ENCODE measurements at regions of chr5 and their contacts with region 1.

Region 1: DNA sequence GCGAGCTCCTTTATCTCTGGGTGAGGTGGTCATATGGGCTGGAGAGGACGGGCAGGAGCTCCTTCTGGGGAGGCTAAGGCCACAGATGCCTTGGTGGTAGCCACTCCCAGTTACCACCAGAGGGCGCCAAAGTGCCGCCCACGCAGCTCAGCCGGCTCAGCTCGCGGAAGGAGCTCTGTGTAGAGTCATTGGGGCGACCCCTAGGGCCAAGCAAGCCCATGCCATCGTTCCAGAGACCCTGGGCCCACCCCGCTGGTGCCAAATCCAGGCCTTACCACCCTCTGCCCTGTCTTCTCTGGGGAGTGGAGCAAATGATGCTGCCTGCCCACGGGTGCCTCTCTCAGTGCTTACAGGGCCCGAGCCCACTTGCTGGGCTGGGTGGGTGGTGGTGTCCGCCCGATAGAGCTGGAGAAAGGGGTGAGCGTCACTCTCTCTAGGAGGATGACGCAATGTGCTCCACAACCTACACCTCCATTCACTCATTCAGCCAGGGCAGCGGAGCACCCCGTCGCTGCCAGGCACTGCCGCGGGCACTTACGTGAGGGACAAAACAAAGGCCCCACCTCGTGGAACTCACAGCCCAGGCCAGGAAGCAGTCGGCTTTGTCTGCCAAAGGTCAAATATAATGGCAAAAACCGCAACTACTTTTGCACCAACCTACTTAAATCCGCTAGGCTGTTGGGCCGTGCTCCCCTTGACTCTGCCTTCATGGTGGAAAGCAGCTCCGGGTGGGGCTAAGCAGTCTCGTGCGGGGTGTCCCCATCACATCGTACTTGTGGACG is 13.8 kb downstream of the TSPAN17 start:
- DNase-seq: peak; percentile 92
- H3K4me3 ChIP-seq: no peak overlapping the region; a peak in 1 of 4 replicates
- H3K27ac ChIP-seq: no peak overlapping the region
- H3K4me1 ChIP-seq: peaks cover 0 to 23% of the 10 kb centered on the region in 2 experiments; a peak in 1 of 4 replicates
- H3K27me3 ChIP-seq: no peaks in the 10 kb centered on the region
- CTCF ChIP-seq: peak; percentile 92
- EP300 ChIP-seq: no peak
- RAD21 ChIP-seq: peak; percentile 97

Region 2: GRCh38 chr5:176647030-176647866 is 13.8 kb before region 1 on chr5 and contains the start of gene TSPAN17:
- CTCF ChIA-PET with region 1: interaction called, 33 read pairs
- POLR2A ChIA-PET with region 1: interaction called, 6 read pairs
- DNase-seq: peak; percentile 100
- H3K4me3 ChIP-seq: peak within 1 kb of the TSS; percentile 89 to 94
- H3K27ac ChIP-seq: peak within 1 kb of the TSS; percentile 52 to 87; a peak in 3 of 4 replicates
- H3K4me1 ChIP-seq: peaks cover 4 to 42% of the 10 kb centered on the region in 2 experiments; a peak in 2 of 4 replicates
- H3K27me3 ChIP-seq: no peaks in the 10 kb centered on the region
- CTCF ChIP-seq: peak; percentile 46
- EP300 ChIP-seq: no peak; a peak in 1 of 4 replicates
- RAD21 ChIP-seq: peak; percentile 69
- polyA plus RNA-seq, gene TSPAN17: 61.7 and 68.4 TPM in 2 replicates

Region 3: GRCh38 chr5:176725521-176726280 is 64.7 kb after region 1 on chr5:
- CTCF ChIA-PET with region 1: interaction called, 15 read pairs
- POLR2A ChIA-PET with region 1: no interaction called
- DNase-seq: no peak
- H3K4me3 ChIP-seq: no peak overlapping the region
- H3K27ac ChIP-seq: no peak overlapping the region
- H3K4me1 ChIP-seq: peaks cover 0 to 16% of the 10 kb centered on the region in 2 experiments; a peak in 1 of 4 replicates
- H3K27me3 ChIP-seq: peaks cover 17% of the 10 kb centered on the region; the same call in 1 of the 2 replicates
- CTCF ChIP-seq: no peak
- EP300 ChIP-seq: no peak
- RAD21 ChIP-seq: no peak

Region 4: DNA sequence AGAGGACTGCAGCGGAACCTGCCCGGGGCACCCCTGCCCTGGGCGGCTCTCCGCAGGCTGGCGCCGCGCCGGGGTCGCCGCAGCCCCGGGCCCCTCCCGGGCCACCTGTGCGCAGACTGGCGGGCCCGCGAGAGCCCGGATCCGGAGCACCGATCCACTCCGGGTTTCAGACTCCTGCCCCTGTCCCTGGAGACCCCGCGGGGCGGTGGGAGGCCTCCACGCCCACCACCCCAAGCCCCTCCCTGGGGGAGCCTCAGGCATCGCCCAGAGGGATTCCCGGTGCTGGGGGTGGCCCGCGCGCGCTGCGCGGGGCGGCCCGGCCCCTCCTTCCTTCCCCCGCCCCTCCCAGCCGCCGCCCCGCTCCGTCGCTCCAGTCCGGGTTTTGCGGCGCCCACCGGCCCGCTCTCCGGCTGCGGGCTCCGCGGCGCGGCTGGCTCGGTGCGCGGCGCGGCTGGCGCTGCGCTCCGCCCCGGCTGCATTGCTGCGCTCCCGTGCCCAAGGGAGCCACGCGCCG is 149.1 kb after region 1 on chr5 and contains the start of gene UNC5A:
- CTCF ChIA-PET with region 1: interaction called, 167 read pairs
- POLR2A ChIA-PET with region 1: interaction called, 3 read pairs
- DNase-seq: peak; percentile 91
- H3K4me3 ChIP-seq: peak within 1 kb of the TSS; percentile 53
- H3K27ac ChIP-seq: peak within 1 kb of the TSS in 1 of 2 experiments; percentile 70; a peak in 2 of 4 replicates
- H3K4me1 ChIP-seq: peaks cover 0 to 40% of the 10 kb centered on the region in 2 experiments; a peak in 1 of 4 replicates
- H3K27me3 ChIP-seq: peaks cover 17% of the 10 kb centered on the region
- CTCF ChIP-seq: no peak
- EP300 ChIP-seq: no peak
- RAD21 ChIP-seq: no peak
- polyA plus RNA-seq, gene UNC5A: 0.46 and 0.55 TPM in 2 replicates

Region 5: GRCh38 chr5:176954050-176954449 is 293.0 kb after region 1 on chr5:
- CTCF ChIA-PET with region 1: interaction called, 53 read pairs
- POLR2A ChIA-PET with region 1: interaction called, 4 read pairs
- DNase-seq: no peak
- H3K4me3 ChIP-seq: no peak overlapping the region
- H3K27ac ChIP-seq: peak overlapping the region in 1 of 2 experiments; percentile 25; a peak in 1 of 4 replicates
- H3K4me1 ChIP-seq: peaks cover 7 to 10% of the 10 kb centered on the region in 2 experiments; a peak in 3 of 4 replicates
- H3K27me3 ChIP-seq: no peaks in the 10 kb centered on the region
- CTCF ChIP-seq: no peak
- EP300 ChIP-seq: no peak
- RAD21 ChIP-seq: no peak

Region 6: DNA sequence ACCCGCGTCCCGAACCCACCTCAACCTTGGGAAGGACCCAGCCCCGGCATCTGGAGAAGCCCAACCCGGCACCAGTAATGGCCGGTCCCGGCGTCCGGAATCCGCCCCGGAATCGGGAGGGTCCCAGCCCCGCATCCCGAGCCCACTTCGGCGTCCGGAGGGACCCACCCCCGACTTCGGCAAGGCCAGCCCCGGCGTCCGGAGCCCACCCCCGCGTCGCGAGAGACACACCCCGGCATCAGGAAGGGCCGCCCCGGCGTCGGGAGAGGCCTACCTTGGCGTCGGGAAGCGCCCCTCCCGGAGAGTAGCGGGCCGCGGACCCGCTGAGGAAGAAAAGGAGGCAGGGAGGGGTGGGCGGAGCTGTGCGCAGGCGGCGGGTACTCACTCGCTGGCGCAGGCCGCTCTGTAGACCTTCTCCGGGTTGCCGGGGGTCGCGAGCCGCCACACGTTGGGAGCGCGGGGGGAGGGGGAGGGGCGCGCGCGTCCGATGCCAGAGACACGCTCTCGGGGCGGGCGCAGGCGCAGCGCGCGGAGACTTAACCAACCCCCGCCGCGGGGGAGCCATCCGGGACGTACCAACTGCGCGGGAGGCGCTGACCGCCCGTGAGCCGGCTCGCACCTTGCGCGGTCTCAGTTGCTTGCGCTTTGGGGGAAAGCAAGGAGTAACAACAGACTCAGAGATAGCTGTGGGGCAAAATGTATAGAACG is 345.4 kb after region 1 on chr5 and contains the start of gene UIMC1:
- CTCF ChIA-PET with region 1: interaction called, 21 read pairs
- POLR2A ChIA-PET with region 1: interaction called, 3 read pairs
- DNase-seq: peak; percentile 97
- H3K4me3 ChIP-seq: peak within 1 kb of the TSS; percentile 73 to 86
- H3K27ac ChIP-seq: peak within 1 kb of the TSS; percentile 85 to 88
- H3K4me1 ChIP-seq: peaks cover 8% of the 10 kb centered on the region in 2 experiments; a peak in 3 of 4 replicates
- H3K27me3 ChIP-seq: no peaks in the 10 kb centered on the region
- CTCF ChIP-seq: no peak
- EP300 ChIP-seq: peak in 1 of 2 experiments; percentile 56; a peak in 1 of 4 replicates
- RAD21 ChIP-seq: no peak
- polyA plus RNA-seq, gene UIMC1: 19.9 and 24.3 TPM in 2 replicates

Measured in SK-N-SH (cell line).